ENCODE measurements at regions of chr9 and their contacts with region 1.

Region 1: DNA sequence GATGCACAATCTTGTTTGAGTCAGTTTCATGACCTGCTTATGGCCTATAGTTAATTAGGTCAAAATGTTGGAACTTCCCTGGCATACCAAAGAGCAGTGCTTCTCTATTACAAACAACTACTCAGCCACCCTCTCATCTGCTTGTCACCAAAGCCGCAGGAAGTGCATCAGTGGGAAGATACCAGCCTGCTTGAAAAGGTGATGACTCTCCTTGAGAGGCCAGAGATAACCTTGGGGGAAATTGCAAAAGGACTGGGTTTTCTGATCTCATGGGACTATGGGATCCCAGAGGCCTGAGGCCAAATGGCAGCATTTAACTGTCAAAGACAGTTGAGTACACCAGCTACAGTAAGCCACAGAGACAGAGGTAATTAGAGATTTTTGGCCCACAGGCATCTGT is 69.9 kb downstream of the C9orf57 start:
- DNase-seq: no peak
- H3K4me3 ChIP-seq: no peak overlapping the region
- H3K27ac ChIP-seq: no peak overlapping the region
- H3K4me1 ChIP-seq: no peaks in the 10 kb centered on the region
- H3K27me3 ChIP-seq: no peaks in the 10 kb centered on the region
- CTCF ChIP-seq: no peak
- EP300 ChIP-seq: no peak
- POLR2A ChIP-seq: no peak

Region 2: GRCh38 chr9:71830929-71831328 is 159.5 kb before region 1 on chr9:
- intact Hi-C with region 1: loop called (anchors 10 kb)
- DNase-seq: no peak
- H3K4me3 ChIP-seq: no peak overlapping the region
- H3K27ac ChIP-seq: no peak overlapping the region
- H3K4me1 ChIP-seq: no peaks in the 10 kb centered on the region
- H3K27me3 ChIP-seq: no peaks in the 10 kb centered on the region
- CTCF ChIP-seq: no peak
- EP300 ChIP-seq: no peak
- POLR2A ChIP-seq: no peak